Right ventricle myocardium superior (tissue), 1 donor: ENCODE measurements at regions of chr4 and their contacts with region 1.

Region 1: DNA sequence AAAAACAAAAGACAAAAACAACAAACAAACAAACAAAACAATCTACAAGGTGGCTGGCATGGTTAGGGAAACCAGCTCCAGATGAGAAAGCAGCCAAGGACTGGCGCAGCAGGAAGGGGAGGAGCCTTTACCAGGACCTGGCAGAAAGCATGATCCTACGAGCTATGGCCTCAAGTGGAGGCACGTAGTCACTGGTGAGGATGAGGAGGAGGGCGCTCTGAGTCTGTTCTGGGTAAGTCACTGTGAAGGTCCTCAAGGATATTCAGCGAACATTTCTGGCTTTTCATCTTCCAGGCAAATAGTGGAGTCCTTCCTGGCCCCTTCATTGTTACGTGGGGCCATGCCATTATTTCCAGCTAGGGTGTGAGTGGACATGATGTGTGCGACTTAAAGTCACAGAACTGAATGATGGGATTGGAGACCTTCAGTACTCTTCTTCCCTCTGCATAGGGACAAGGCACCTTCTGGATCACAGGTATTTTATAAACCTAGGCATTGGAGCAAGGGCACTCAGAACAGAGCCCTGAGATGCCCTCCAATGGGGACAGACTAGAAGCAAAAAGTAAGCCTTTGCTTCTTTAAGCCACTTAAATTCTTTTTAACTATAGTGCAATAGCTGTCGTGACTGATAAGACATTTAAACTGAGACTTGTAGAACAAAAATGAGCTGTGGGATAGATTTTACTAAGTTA is 771.3 kb downstream of the RAB28 start:
- DNase-seq: no peak
- ATAC-seq: no peak

Region 2: DNA sequence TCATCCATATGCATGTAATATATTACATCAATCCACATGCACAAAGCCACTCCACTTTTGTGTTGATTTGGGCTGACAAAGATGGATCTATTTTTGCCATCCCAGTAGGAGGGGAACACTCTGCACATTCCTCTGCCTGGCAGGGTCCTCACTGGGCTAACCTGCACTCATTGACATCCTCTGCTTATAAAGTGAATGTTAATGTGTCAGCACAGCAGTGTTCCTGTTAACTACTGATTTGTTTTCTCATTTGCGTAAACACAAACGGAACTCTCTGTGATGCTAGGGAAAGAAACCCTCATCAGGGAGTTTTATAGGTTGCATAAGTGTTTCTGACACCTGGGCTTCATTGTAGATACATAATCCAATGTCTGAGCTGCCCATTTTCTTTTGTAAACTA is 54.6 kb before region 1 on chr4:
- intact Hi-C with region 1: loop called (anchors 10 kb)
- DNase-seq: no peak
- ATAC-seq: no peak

Region 3: GRCh38 chr4:12778706-12779105 is 65.9 kb after region 1 on chr4:
- intact Hi-C with region 1: no loop called
- DNase-seq: no peak
- ATAC-seq: no peak